ENCODE measurements at regions of chr3 and their contacts with region 1.

Region 1: DNA sequence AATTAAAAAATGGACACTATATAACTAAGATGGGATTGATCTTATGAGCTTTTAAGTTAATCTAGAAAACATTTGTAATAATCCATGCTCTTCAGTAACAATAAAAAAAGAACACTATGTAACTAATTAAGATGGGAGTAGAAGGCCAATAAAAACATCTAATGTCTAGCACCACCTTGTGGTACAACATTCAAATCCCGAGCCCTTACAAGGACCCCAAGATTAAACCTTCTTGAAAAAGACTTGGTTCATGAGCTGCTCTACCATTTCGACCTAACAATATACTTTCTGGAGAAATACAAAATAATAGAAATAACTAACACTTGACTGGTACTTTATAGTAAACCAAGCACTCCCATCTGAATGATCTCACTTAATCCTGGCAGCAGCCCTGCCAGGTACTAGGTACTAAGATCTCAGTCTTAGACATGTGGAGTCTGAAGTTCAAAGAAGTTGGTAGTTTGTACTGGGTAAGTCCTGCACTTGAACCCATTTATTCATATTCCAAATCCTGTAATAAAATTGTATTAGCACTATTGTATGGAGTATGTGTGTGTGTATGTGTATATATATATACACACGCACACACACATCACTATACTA is 21.8 kb downstream of the METTL6 start:
- DNase-seq: no peak
- ATAC-seq: peak; percentile 73
- H3K4me3 Mint-ChIP-seq: no peak overlapping the region
- H3K27ac Mint-ChIP-seq: no peak overlapping the region
- H3K4me1 Mint-ChIP-seq: peaks cover 24% of the 10 kb centered on the region
- H3K27me3 Mint-ChIP-seq: no peaks in the 10 kb centered on the region
- CTCF ChIP-seq: peak; percentile 27

Region 2: DNA sequence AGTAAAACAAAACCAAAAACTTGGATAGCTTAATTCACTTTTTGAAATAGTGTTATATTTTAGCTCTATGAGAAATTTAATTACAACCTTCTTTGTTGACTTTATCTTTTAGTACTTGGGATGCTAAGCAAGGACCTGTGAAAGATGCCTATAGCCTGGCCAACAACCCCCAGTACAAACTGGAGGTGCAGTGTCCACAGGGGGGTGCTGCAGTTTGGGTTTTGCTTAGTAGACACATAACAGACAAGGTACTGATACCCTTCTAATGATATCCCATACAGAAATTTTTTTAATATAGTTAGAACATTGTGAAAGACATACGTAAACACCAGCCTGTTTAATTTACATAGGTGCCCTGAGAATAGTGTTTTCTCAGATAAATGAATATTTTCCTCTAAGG is 164.2 kb before region 1 on chr3:
- CTCF ChIA-PET with region 1: interaction called, 21 read pairs
- POLR2A ChIA-PET with region 1: no interaction called
- intact Hi-C with region 1: loop called (anchors 1 kb)
- DNase-seq: no peak
- ATAC-seq: peak; percentile 65
- H3K4me3 Mint-ChIP-seq: no peak overlapping the region
- H3K27ac Mint-ChIP-seq: no peak overlapping the region
- H3K4me1 Mint-ChIP-seq: no peaks in the 10 kb centered on the region
- H3K27me3 Mint-ChIP-seq: no peaks in the 10 kb centered on the region
- CTCF ChIP-seq: no peak

Region 3: GRCh38 chr3:15361494-15362212 is 43.9 kb before region 1 on chr3:
- CTCF ChIA-PET with region 1: interaction called, 15 read pairs
- POLR2A ChIA-PET with region 1: interaction called, 3 read pairs
- intact Hi-C with region 1: no loop called
- DNase-seq: peak; percentile 44
- ATAC-seq: peak; percentile 70
- H3K4me3 Mint-ChIP-seq: peak overlapping the region; percentile 64
- H3K27ac Mint-ChIP-seq: peak overlapping the region; percentile 74
- H3K4me1 Mint-ChIP-seq: peaks cover 65% of the 10 kb centered on the region
- H3K27me3 Mint-ChIP-seq: no peaks in the 10 kb centered on the region
- CTCF ChIP-seq: no peak

Region 4: GRCh38 chr3:15384510-15385237 is 20.9 kb before region 1 on chr3:
- CTCF ChIA-PET with region 1: interaction called, 25 read pairs
- POLR2A ChIA-PET with region 1: interaction called, 5 read pairs
- intact Hi-C with region 1: no loop called
- DNase-seq: no peak
- ATAC-seq: peak; percentile 90
- H3K4me3 Mint-ChIP-seq: peak overlapping the region; percentile 71
- H3K27ac Mint-ChIP-seq: peak overlapping the region; percentile 95
- H3K4me1 Mint-ChIP-seq: peaks cover 79% of the 10 kb centered on the region
- H3K27me3 Mint-ChIP-seq: no peaks in the 10 kb centered on the region
- CTCF ChIP-seq: no peak

Measured in activated B cell treated with CpG ODN at 0.5 μM for 24 hours (primary cell).